ENCODE measurements at regions of chr1 and their contacts with region 1.

Region 1: GRCh38 chr1:26999440-26999987 is 6.0 kb downstream of the TRNP1 start:
- DNase-seq: no peak
- ATAC-seq: peak; percentile 78

Region 2: GRCh38 chr1:26853156-26853555 is 146.4 kb before region 1 on chr1:
- intact Hi-C with region 1: no loop called
- DNase-seq: peak; percentile 87
- ATAC-seq: peak; percentile 85

Region 3: DNA sequence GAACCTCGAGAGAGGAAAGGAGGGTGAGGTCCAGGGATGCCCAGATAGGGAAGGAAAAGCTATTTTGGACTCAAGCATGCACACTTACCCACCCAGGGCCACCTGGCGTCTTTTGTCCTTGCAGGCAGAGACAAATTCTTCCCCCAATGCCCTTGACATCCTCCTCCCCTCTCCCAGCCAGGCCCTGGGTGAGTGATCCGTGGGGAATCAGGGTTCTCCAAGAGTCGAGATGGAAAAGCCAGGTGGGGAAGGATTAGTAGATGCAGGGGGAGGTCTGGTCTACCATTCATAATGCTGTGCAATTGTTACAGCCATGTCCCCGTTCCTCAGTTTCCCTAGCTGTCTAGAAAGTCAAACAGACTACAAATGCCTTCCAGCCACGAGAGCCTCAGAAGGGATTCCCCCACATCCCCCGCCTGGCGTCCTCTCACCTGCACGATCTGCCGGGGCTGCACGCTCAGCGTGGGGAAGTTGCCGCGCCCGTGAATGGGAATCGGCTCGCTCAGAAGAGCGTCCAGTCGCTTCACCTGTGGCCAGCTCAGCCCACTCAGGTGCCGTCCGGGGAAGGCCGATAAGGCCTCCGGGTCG is 12.6 kb after region 1 on chr1:
- intact Hi-C with region 1: loop called (anchors 2 kb)
- DNase-seq: no peak
- ATAC-seq: no peak

Region 4: DNA sequence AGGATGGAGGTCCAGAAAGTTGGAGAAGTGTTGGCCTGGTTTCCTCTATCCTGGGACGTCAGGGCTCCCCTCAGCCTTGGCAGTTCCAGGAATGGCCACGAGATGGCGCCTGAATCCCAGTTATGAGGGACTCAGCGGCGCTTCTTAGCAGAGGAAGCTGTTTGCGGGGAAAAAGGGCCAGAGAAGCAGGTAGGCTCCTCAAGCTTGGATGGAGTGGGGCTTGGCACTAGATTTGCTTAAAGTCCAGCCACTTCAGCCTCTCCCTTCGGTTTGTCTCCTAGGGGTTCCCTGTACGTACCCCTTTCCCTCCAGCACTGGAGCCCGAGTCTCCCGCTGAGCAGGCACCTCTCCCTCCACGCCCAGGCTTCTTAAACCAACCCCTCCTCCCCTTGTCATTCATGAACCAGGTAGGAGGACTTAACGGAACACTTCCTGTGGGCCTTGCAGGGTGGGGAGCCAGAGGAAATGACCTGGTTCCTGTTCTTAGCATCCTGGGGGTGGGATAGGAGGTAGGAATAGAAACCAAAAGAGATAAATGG is 45.2 kb after region 1 on chr1:
- intact Hi-C with region 1: loop called (anchors 2 kb)
- DNase-seq: peak; percentile 92
- ATAC-seq: peak; percentile 92